Heart left ventricle (tissue), 16 donors: ENCODE measurements at regions of chr15 and their contacts with region 1.

Region 1: DNA sequence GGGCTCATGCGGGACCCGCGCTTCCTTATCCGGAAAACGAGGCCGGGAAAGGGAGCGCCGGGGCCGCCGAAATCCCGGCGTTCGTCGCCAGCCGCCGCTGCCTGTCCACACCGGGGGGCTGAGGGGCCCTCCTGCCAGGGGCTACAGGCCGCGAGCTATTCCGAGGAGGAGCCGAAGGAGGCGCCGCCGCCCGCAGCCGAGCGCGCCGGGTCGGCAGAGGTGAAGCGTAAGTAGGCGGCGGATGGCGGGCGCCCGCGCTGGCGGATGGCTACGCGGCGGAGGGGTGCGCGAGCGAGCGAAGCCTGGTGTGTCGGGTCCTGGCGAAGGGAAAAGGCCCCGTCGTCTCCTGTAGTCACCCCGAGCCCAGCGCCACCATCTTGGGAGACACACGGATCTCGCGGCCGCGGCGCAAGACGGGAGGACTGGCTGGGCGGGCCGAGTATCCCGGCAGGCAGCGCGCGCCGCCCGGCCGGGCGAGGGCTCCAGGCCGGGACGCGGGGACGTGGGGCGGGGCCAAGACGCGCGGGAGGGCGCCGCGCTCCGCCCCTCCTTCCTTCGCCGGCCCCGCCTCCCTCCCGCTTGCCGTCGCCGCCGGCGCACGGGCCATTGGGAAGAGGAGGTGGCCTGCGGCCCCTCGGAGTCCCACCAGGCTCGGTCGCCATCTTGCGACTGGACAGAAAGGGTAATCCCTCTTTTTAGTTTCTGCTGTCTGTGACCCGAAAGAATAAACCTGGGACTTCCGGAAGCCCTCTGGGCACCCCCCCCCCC is at the start of gene UBE3A:
- DNase-seq: peak; percentile 92 to 96 (median 94)
- ATAC-seq: peak; percentile 94 to 98 (median 98)
- H3K4me3 ChIP-seq: peak within 1 kb of the TSS; percentile 79 to 100 (median 98)
- H3K27ac ChIP-seq: peak within 1 kb of the TSS; percentile 95 to 100 (median 99)
- H3K4me1 ChIP-seq: peaks cover 0 to 45% (median 32%) of the 10 kb centered on the region in 12 donors
- H3K27me3 ChIP-seq: no peaks in the 10 kb centered on the region
- CTCF ChIP-seq: peak in 8 of 12 donors; percentile 1 to 50 (median 36)
- POLR2A ChIP-seq: peak in 1 of 2 donors; percentile 83
- total RNA-seq, gene UBE3A: 73.0 to 140 (median 111) TPM

Region 2: DNA sequence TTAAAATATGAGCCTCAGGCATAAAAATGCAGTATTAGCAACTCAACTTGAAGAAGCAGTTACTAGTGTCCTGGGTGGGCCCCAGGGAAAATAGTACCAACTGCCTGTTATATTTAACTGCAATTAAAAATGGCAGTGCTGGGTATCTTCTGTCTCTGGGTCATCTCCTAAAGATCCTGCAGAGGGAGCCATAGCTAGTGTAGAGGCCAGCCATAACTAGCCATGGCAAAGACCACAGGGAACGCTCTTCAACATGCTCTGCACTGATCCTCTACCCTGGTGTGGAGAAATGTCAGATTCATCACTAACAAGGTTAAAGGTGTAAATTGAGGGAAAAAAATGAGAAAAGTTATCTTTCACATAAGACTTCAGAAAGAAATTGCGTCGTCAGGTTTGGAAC is 302.7 kb before region 1 on chr15:
- intact Hi-C with region 1: loop called in 1 of 10 experiments (anchors 10 kb)
- DNase-seq: no peak
- ATAC-seq: peak in 3 of 4 donors; percentile 57 to 71 (median 70)
- H3K4me3 ChIP-seq: no peak overlapping the region
- H3K27ac ChIP-seq: no peak overlapping the region
- H3K4me1 ChIP-seq: peaks cover 0 to 8% (median 0%) of the 10 kb centered on the region in 12 donors
- H3K27me3 ChIP-seq: no peaks in the 10 kb centered on the region
- CTCF ChIP-seq: peak in 11 of 12 donors; percentile 11 to 44 (median 30)
- POLR2A ChIP-seq: no peak

Region 3: DNA sequence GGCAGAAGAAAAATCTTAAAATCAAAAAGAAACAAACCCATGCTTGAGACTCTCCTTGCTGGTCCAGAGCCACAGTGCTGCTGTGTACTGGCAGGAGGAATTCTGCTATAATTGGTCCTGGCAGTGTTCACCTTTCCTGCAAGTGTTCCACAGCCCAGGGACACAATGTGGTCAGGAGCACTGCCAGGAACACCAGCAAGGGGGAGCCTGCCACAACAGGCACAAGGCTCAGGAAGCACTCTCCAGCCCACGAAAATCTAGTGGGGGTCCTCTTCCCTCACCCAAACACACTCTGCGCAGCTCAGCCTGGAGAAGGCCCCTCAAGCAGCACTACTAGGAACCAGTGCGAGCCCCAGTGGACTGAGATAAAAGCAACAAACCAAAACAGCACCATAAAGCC is 92.8 kb before region 1 on chr15:
- intact Hi-C with region 1: loop called in 8 of 10 experiments (anchors 5 to 10 kb)
- DNase-seq: peak; percentile 57 to 82 (median 66)
- ATAC-seq: peak; percentile 99
- H3K4me3 ChIP-seq: peak overlapping the region in 1 of 12 donors; percentile 22
- H3K27ac ChIP-seq: peak overlapping the region in 10 of 12 donors; percentile 1 to 78 (median 44)
- H3K4me1 ChIP-seq: peaks cover 0 to 16% (median 0%) of the 10 kb centered on the region in 12 donors
- H3K27me3 ChIP-seq: no peaks in the 10 kb centered on the region
- CTCF ChIP-seq: peak in 11 of 12 donors; percentile 13 to 58 (median 42)
- POLR2A ChIP-seq: no peak

Region 4: GRCh38 chr15:25372298-25372697 is 66.5 kb before region 1 on chr15:
- intact Hi-C with region 1: loop called in 3 of 10 experiments (anchors 5 to 10 kb)
- DNase-seq: no peak
- ATAC-seq: no peak
- H3K4me3 ChIP-seq: no peak overlapping the region
- H3K27ac ChIP-seq: peak overlapping the region in 1 of 12 donors; percentile 7
- H3K4me1 ChIP-seq: peaks cover 0 to 26% (median 5%) of the 10 kb centered on the region in 12 donors
- H3K27me3 ChIP-seq: no peaks in the 10 kb centered on the region
- CTCF ChIP-seq: no peak
- POLR2A ChIP-seq: no peak

Region 5: DNA sequence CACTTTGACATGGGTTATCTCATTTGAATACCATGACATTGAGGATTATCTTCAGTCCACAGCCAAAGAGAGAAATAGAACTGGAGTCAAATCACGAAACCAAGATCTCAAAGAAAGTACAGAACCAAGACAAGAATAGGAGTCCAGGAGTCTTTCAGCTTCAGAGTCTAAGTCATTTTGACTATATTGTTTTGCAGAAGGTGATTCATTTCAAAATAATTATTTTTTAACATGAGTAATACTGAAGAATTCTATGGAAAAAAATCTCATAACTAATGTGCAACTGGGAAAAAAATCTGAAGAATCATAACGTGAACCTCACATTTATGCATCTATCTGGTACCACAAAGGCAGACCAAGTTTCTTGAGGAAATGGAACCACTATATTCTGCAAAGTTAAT is 60.3 kb before region 1 on chr15:
- intact Hi-C with region 1: loop called in 3 of 10 experiments (anchors 5 to 10 kb)
- DNase-seq: no peak
- ATAC-seq: no peak
- H3K4me3 ChIP-seq: no peak overlapping the region
- H3K27ac ChIP-seq: no peak overlapping the region
- H3K4me1 ChIP-seq: peaks cover 0 to 29% (median 8%) of the 10 kb centered on the region in 12 donors
- H3K27me3 ChIP-seq: no peaks in the 10 kb centered on the region
- CTCF ChIP-seq: no peak
- POLR2A ChIP-seq: no peak

Region 6: GRCh38 chr15:25508369-25509002 is 69.7 kb after region 1 on chr15:
- intact Hi-C with region 1: no loop called
- DNase-seq: no peak
- ATAC-seq: peak in 2 of 4 donors; percentile 39 to 52
- H3K4me3 ChIP-seq: no peak overlapping the region
- H3K27ac ChIP-seq: no peak overlapping the region
- H3K4me1 ChIP-seq: peaks cover 0 to 3% (median 0%) of the 10 kb centered on the region in 12 donors
- H3K27me3 ChIP-seq: no peaks in the 10 kb centered on the region
- CTCF ChIP-seq: peak; percentile 46 to 83 (median 72)
- POLR2A ChIP-seq: no peak

Region 7: GRCh38 chr15:26082221-26083109 is 643.7 kb after region 1 on chr15:
- intact Hi-C with region 1: loop called in 1 of 10 experiments (anchors 5 kb)
- DNase-seq: peak; percentile 93 to 98 (median 97)
- ATAC-seq: peak; percentile 98 to 100 (median 99)
- H3K4me3 ChIP-seq: peak overlapping the region; percentile 50 to 91 (median 78)
- H3K27ac ChIP-seq: peak overlapping the region; percentile 72 to 94 (median 88)
- H3K4me1 ChIP-seq: peaks cover 0 to 7% (median 3%) of the 10 kb centered on the region in 12 donors
- H3K27me3 ChIP-seq: no peaks in the 10 kb centered on the region
- CTCF ChIP-seq: peak in 1 of 12 donors; percentile 25
- POLR2A ChIP-seq: peak in 1 of 2 donors; percentile 87